ENCODE measurements at regions of chr7 and their contacts with region 1.

Region 1: GRCh38 chr7:33982425-33982786 is 77.1 kb downstream of the BMPER start:
- DNase-seq: no peak
- H3K4me3 ChIP-seq: no peak overlapping the region
- H3K27ac ChIP-seq: no peak overlapping the region
- H3K27me3 ChIP-seq: no peaks in the 10 kb centered on the region
- CTCF ChIP-seq: peak; percentile 72

Region 2: GRCh38 chr7:33850768-33851167 is 131.6 kb before region 1 on chr7:
- CTCF ChIA-PET with region 1: no interaction called
- POLR2A ChIA-PET with region 1: no interaction called
- DNase-seq: no peak
- H3K4me3 ChIP-seq: no peak overlapping the region
- H3K27ac ChIP-seq: no peak overlapping the region
- H3K27me3 ChIP-seq: peaks cover 3% of the 10 kb centered on the region
- CTCF ChIP-seq: no peak

Region 3: GRCh38 chr7:33964417-33965182 is 17.8 kb before region 1 on chr7:
- CTCF ChIA-PET with region 1: interaction called, 11 read pairs
- POLR2A ChIA-PET with region 1: no interaction called
- DNase-seq: no peak
- H3K4me3 ChIP-seq: no peak overlapping the region
- H3K27ac ChIP-seq: no peak overlapping the region
- H3K27me3 ChIP-seq: no peaks in the 10 kb centered on the region
- CTCF ChIP-seq: no peak

Region 4: DNA sequence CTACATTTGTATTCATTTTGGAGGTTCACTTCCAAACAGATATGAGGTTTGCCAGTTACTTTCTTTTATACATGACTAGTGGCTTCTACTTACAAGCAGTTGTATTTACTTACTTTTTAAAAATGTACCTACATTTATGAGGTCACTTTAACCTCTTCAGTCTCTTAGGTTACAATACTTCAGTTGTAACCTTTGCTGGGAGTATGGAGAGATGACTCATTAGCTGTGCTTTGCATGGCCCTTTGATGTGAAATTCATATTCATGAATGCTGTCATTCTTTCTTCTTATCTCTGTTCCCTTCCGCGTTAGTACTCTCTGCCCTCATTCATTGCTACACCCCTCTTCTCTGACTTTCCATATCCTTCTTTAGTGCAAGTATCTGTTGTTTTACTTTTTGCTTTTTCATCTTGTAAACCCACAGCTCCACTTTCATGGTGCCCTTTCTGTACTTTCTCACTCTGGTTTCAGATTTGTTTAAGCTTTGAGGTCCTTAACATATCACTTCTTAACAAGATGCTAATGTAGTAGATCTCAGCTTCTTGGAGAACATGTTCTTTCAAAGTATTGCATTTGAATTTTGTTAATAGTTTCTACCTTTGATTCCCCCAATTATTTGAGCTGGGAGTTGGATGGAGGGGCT is 87.3 kb after region 1 on chr7:
- CTCF ChIA-PET with region 1: interaction called, 9 read pairs
- POLR2A ChIA-PET with region 1: interaction called, 10 read pairs
- DNase-seq: no peak
- H3K4me3 ChIP-seq: no peak overlapping the region
- H3K27ac ChIP-seq: no peak overlapping the region
- H3K27me3 ChIP-seq: no peaks in the 10 kb centered on the region
- CTCF ChIP-seq: no peak

Region 5: DNA sequence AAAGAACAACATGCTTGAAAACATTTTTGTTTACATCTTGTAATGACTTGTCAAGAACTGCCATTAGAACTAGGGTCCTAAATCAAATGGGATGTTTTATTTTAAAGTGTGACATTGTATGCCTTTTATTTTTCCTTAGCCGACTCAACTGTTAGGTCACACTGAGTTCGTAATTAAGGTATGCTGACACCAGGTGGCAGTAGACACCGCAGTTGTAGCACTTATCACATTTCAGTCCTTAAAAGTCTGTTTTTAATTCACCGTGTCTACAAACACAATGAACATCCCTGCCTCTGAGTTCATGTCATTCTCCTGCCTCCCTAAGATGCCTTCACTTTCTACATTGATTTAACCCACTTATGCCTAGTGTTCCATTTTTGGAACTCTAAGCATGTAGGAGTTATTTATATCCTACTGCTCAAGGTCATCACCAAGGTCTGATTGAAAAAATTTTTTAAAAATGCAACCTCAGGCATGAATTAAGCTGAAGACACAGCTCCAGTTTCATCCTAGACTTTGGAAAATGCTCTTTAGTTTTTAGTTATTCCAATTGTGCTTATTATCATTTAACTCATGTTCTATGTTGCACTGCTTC is 109.0 kb after region 1 on chr7:
- CTCF ChIA-PET with region 1: interaction called, 58 read pairs
- POLR2A ChIA-PET with region 1: no interaction called
- DNase-seq: peak; percentile 18
- H3K4me3 ChIP-seq: no peak overlapping the region
- H3K27ac ChIP-seq: no peak overlapping the region
- H3K27me3 ChIP-seq: no peaks in the 10 kb centered on the region
- CTCF ChIP-seq: peak; percentile 51

Measured in AG04450 (cell line).